ENCODE measurements at regions of chr11 and their contacts with region 1.

Region 1: GRCh38 chr11:82867495-82868082 is 32.6 kb downstream of the PRCP start:
- DNase-seq: peak; percentile 91
- H3K4me3 Mint-ChIP-seq: peak overlapping the region; percentile 15
- H3K27ac Mint-ChIP-seq: peak overlapping the region; percentile 31
- H3K4me1 Mint-ChIP-seq: peaks cover 9% of the 10 kb centered on the region
- H3K27me3 Mint-ChIP-seq: no peaks in the 10 kb centered on the region

Region 2: DNA sequence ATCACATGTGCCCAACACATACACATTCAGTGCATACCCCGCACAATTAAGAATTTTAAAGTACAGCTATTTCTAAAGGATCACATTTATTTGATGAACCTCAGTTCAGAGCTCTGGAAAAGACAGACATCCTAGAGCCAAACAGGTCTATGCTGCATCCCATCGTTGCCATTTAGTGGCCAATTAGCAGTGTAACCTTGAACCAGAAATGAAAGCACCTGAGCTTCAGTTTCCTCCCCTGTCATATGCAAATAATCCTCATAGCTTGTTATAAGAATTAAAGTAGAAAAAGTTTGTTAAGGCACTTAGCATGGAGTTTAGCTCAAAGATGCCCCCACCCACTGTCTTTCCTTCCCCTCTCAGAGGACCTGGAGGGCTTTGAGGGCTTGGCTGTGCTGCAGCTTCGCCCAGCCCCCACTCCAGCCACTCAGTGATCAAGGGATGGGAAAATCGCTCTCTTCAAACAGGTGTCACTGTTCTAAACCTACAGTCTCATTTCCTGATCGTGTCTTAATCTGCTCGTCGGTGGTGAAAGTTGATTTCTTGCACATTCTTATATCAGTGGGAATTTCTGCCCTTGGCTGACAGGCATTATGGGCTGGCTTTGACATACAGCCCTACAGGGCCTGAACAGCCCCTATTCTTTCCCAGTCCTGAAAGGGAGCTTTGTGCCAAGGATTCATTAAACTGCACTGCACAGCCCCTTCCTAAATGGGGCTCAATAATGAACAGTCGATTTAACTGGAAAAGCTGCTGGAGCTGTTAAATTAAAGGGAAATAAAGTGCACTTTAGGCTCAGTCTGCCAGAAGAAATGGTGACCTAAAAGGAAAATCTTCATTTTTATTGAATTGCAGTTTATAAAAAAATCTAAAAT is 110.6 kb before region 1 on chr11:
- CTCF ChIA-PET with region 1: interaction called, 10 read pairs
- intact Hi-C with region 1: no loop called
- DNase-seq: peak; percentile 21
- H3K4me3 Mint-ChIP-seq: peak overlapping the region; percentile 19
- H3K27ac Mint-ChIP-seq: no peak overlapping the region
- H3K4me1 Mint-ChIP-seq: peaks cover 26% of the 10 kb centered on the region
- H3K27me3 Mint-ChIP-seq: no peaks in the 10 kb centered on the region

Region 3: GRCh38 chr11:82889133-82890001 is 21.8 kb after region 1 on chr11:
- CTCF ChIA-PET with region 1: interaction called, 12 read pairs
- intact Hi-C with region 1: no loop called
- DNase-seq: no peak
- H3K4me3 Mint-ChIP-seq: no peak overlapping the region
- H3K27ac Mint-ChIP-seq: no peak overlapping the region
- H3K4me1 Mint-ChIP-seq: peaks cover 4% of the 10 kb centered on the region
- H3K27me3 Mint-ChIP-seq: no peaks in the 10 kb centered on the region

Region 4: GRCh38 chr11:83193315-83194280 is 326.0 kb after region 1 on chr11 and contains the start of gene ANKRD42:
- CTCF ChIA-PET with region 1: no interaction called
- intact Hi-C with region 1: loop called (anchors 1 kb)
- DNase-seq: peak; percentile 90
- H3K4me3 Mint-ChIP-seq: peak within 1 kb of the TSS; percentile 95
- H3K27ac Mint-ChIP-seq: peak within 1 kb of the TSS; percentile 95
- H3K4me1 Mint-ChIP-seq: peaks cover 44% of the 10 kb centered on the region
- H3K27me3 Mint-ChIP-seq: no peaks in the 10 kb centered on the region
- total RNA-seq, gene ANKRD42: 2.3 to 2.7 TPM

Region 5: GRCh38 chr11:83285771-83286528 is 418.4 kb after region 1 on chr11 and contains the start of gene CCDC90B:
- CTCF ChIA-PET with region 1: interaction called, 4 read pairs
- intact Hi-C with region 1: loop called (anchors 1 kb)
- DNase-seq: peak; percentile 97
- H3K4me3 Mint-ChIP-seq: peak within 1 kb of the TSS; percentile 97
- H3K27ac Mint-ChIP-seq: peak within 1 kb of the TSS; percentile 98
- H3K4me1 Mint-ChIP-seq: peaks cover 28% of the 10 kb centered on the region
- H3K27me3 Mint-ChIP-seq: no peaks in the 10 kb centered on the region
- total RNA-seq, gene CCDC90B: 28.2 to 29.5 TPM

Region 6: GRCh38 chr11:83724008-83724461 is 856.4 kb after region 1 on chr11:
- CTCF ChIA-PET with region 1: interaction called, 3 read pairs
- intact Hi-C with region 1: loop called (anchors 1 kb)
- DNase-seq: peak; percentile 49
- H3K4me3 Mint-ChIP-seq: peak overlapping the region; percentile 45
- H3K27ac Mint-ChIP-seq: no peak overlapping the region
- H3K4me1 Mint-ChIP-seq: peaks cover 8% of the 10 kb centered on the region
- H3K27me3 Mint-ChIP-seq: peaks cover 9% of the 10 kb centered on the region

Measured in activated naive CD4-positive, alpha-beta T cell treated with anti-CD3 and anti-CD28 coated beads for 36 hours (primary cell).